ENCODE measurements at regions of chr19 and their contacts with region 1.

Region 1: DNA sequence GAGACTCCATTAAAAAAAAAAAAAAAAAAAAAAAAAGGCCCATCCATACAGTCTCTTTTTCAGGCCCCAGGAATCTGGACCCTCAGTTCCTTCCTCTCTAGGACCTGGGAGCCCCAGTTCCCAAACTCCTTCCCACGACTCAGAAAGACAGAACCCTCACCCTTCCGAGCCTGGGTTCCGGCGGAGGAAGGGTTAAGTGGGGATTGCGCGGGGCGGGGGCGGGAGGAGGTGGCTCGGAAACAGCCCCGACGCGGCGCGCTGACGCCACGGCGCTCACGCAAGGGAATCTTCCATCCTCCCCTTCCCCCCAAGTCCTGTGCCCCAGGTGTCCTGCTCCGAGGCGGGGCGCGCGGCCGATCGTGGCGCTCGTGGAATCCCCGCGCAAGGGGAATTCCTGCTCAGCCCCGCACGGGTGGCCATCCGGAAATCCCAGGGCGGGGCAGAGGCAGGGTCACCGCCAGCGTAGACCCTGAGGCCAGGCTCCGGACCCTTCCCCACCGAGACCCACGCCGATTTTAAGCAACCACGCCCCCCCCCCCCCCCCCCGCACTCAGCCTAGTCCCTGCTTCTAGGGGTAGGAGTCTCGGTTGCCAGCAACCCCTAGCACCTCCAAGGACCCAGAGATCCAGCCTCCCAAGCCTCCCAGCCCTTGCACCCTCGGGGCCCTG is 659 bp downstream of the NFKBID start:
- DNase-seq: peak; percentile 85
- H3K4me3 Mint-ChIP-seq: peak overlapping the region; percentile 97
- H3K27ac Mint-ChIP-seq: peak overlapping the region; percentile 98
- H3K4me1 Mint-ChIP-seq: peaks cover 42% of the 10 kb centered on the region
- H3K27me3 Mint-ChIP-seq: no peaks in the 10 kb centered on the region

Region 2: GRCh38 chr19:35693830-35694599 is 205.7 kb before region 1 on chr19:
- intact Hi-C with region 1: loop called (anchors 1 kb)
- DNase-seq: peak; percentile 86
- H3K4me3 Mint-ChIP-seq: no peak overlapping the region
- H3K27ac Mint-ChIP-seq: peak overlapping the region; percentile 38
- H3K4me1 Mint-ChIP-seq: peaks cover 27% of the 10 kb centered on the region
- H3K27me3 Mint-ChIP-seq: no peaks in the 10 kb centered on the region

Region 3: DNA sequence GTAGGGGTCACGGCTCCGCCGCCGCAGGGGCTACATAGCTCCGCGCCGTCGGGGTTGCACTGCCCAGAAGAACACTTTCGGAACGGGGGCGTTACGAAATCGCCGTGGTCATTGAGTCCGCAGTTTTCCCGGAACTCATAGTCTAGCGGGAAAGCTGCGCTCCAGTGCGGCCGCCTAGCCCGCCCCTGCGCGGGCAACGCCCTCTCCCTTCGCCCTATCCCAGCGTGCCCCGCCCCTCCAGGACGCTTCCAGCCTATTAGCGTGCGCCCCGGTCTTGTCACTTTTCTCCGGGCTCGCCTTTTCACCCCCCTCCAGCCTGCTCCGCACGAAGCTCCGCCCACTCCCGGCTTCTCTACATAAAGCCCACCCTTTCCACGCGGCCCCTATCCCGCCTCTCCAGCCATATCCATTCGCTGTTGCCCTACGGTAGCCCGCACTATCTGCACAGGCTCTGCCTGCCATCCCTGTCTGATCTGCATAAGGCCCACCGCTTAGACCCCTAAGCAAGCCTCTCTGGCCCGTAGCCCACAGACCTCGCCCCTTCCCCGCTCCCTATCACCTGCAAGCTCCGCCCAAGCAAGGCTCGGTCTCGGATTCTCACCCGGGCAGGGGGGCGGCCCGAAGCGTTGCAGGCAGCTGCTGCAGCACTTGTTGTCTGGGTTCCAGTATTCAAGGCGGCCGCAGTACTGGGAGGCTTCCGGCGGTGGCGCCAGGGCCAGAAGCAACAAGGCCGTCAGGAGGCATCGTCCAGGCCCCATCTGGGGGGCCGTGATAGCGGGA is 159.1 kb before region 1 on chr19:
- intact Hi-C with region 1: loop called (anchors 1 kb)
- DNase-seq: peak; percentile 95
- H3K4me3 Mint-ChIP-seq: peak overlapping the region; percentile 93
- H3K27ac Mint-ChIP-seq: peak overlapping the region; percentile 93
- H3K4me1 Mint-ChIP-seq: peaks cover 23% of the 10 kb centered on the region
- H3K27me3 Mint-ChIP-seq: peaks cover 2% of the 10 kb centered on the region

Region 4: DNA sequence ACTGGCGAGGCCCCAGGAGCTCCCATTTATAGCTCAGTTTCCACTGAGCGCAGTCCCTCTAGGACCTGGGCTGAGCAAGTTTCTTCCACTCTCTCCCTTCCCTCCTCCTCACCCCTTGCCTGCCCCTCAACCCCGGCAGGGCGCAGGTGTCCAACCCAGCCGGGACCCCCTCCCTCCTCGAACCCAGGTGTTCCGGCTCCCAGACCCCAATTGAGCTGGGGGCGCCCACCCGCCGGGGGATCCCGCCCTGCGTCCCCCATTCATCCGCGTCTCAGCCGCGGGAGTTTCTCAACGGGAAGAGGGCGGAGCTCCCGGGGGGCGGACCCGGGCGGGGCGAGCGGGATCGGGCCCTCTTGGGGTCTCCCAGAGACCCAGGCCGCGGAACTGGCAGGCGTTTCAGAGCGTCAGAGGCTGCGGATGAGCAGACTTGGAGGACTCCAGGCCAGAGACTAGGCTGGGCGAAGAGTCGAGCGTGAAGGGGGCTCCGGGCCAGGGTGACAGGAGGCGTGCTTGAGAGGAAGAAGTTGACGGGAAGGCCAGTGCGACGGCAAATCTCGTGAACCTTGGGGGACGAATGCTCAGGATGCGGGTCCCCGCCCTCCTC is 43.0 kb before region 1 on chr19 and contains the start of gene KIRREL2:
- intact Hi-C with region 1: no loop called
- DNase-seq: peak; percentile 45
- H3K4me3 Mint-ChIP-seq: peak within 1 kb of the TSS; percentile 83
- H3K27ac Mint-ChIP-seq: no peak within 1 kb of the TSS
- H3K4me1 Mint-ChIP-seq: peaks cover 17% of the 10 kb centered on the region
- H3K27me3 Mint-ChIP-seq: peaks cover 41% of the 10 kb centered on the region
- total RNA-seq, gene KIRREL2: 1.7 TPM in 2 replicates

Region 5: DNA sequence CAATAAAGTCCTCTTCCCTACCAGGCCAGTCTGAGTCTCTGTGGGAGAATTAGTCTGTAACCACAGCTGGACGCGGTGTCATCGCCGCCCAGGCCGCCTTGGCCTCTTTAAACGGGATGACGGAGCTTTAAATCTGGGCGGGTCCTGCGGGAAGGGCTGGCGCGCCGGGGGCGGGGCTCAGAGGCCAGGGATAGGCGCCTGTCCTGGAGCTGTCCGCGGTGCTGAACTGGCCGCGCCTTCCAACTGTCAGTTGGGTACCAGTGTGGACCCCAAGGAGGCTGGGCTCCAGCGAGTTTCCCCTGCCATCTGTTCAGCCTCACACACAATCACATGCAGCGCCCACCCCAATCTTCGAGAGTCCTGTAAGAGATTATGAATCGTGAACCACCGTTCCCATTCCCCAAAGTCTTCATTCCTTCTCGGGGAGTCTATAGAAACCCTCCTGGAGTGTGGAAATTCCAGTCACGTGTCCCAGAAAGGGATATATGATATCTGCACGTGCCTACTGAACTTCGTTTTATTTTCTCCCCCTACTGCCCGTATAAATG is 19.8 kb before region 1 on chr19:
- intact Hi-C with region 1: loop called (anchors 1 kb)
- DNase-seq: peak; percentile 80
- H3K4me3 Mint-ChIP-seq: no peak overlapping the region
- H3K27ac Mint-ChIP-seq: peak overlapping the region; percentile 23
- H3K4me1 Mint-ChIP-seq: peaks cover 15% of the 10 kb centered on the region
- H3K27me3 Mint-ChIP-seq: peaks cover 12% of the 10 kb centered on the region

Region 6: GRCh38 chr19:35931161-35931873 is 31.6 kb after region 1 on chr19:
- intact Hi-C with region 1: loop called (anchors 1 kb)
- DNase-seq: peak; percentile 100
- H3K4me3 Mint-ChIP-seq: peak overlapping the region; percentile 70
- H3K27ac Mint-ChIP-seq: peak overlapping the region; percentile 81
- H3K4me1 Mint-ChIP-seq: peaks cover 30% of the 10 kb centered on the region
- H3K27me3 Mint-ChIP-seq: no peaks in the 10 kb centered on the region

Region 7: GRCh38 chr19:36014029-36014924 is 114.6 kb after region 1 on chr19 and contains the start of gene ALKBH6:
- intact Hi-C with region 1: loop called (anchors 1 kb)
- DNase-seq: peak; percentile 100
- H3K4me3 Mint-ChIP-seq: peak within 1 kb of the TSS; percentile 98
- H3K27ac Mint-ChIP-seq: peak within 1 kb of the TSS; percentile 96
- H3K4me1 Mint-ChIP-seq: peaks cover 46% of the 10 kb centered on the region
- H3K27me3 Mint-ChIP-seq: no peaks in the 10 kb centered on the region
- total RNA-seq, gene ALKBH6: 48.3 and 60.6 TPM in 2 replicates

Region 8: DNA sequence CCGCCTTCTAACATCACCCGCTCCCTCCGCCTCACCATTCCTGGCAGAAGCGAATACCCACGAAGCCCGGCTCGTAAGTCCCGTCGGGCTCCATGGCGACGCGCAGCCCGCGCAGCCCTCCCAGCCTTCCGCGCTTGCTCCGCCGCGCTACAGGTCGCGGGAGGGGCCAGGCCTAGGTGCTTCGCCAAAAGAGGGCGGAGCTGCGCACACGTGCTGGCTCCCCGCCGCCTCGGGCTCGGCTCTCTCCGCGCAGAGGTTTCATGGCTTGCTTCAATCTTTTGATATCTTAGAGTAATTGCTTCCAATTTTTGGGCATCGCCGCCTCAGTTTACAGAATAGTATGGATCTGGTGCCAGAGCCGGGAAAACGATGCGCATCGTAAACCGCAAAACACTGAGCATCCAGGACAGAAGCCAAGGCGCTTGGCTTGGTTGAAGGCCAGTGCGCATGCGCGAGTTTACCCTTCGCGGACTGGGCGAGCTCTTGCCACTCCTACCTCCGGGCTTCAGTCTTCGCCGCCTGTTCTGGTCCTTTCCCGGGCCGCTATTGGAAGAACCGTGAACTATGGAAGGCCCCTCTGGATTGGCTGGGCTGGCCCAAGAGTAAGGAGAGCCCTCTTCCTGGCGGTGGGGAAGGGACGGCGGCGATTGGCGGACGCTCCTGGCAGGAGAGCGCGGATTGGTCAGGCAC is 215.2 kb after region 1 on chr19 and contains the start of gene POLR2I:
- intact Hi-C with region 1: loop called (anchors 1 kb)
- DNase-seq: peak; percentile 98
- H3K4me3 Mint-ChIP-seq: peak within 1 kb of the TSS; percentile 98
- H3K27ac Mint-ChIP-seq: peak within 1 kb of the TSS; percentile 92
- H3K4me1 Mint-ChIP-seq: peaks cover 38% of the 10 kb centered on the region
- H3K27me3 Mint-ChIP-seq: peaks cover 1% of the 10 kb centered on the region
- total RNA-seq, gene POLR2I: 76.3 and 92.4 TPM in 2 replicates

Region 9: DNA sequence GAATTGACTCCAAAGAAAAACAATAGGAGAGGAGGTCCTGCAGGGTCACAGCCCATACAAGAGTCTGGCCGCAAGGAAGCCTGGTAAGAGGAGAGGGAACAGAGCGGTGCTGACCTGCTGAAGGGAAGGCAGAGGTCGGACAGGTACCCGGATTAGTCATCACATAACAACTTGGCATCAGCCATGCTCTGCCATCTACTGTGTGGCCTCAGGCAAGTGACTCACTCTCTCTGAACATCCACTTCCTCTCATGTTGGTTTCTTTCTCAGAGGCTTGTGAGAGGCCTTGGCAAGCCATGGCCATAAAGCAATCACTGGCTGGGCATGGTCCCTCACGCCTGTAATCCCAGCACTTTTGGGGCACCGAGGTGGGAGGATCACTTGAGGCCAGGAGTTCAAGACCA is 232.8 kb after region 1 on chr19:
- intact Hi-C with region 1: no loop called
- DNase-seq: peak; percentile 17
- H3K4me3 Mint-ChIP-seq: peak overlapping the region; percentile 7
- H3K27ac Mint-ChIP-seq: peak overlapping the region; percentile 78
- H3K4me1 Mint-ChIP-seq: peaks cover 30% of the 10 kb centered on the region
- H3K27me3 Mint-ChIP-seq: peaks cover 1% of the 10 kb centered on the region